Pancreas (tissue), 10 donors: ENCODE measurements at regions of chr3 and their contacts with region 1.

Region 1: DNA sequence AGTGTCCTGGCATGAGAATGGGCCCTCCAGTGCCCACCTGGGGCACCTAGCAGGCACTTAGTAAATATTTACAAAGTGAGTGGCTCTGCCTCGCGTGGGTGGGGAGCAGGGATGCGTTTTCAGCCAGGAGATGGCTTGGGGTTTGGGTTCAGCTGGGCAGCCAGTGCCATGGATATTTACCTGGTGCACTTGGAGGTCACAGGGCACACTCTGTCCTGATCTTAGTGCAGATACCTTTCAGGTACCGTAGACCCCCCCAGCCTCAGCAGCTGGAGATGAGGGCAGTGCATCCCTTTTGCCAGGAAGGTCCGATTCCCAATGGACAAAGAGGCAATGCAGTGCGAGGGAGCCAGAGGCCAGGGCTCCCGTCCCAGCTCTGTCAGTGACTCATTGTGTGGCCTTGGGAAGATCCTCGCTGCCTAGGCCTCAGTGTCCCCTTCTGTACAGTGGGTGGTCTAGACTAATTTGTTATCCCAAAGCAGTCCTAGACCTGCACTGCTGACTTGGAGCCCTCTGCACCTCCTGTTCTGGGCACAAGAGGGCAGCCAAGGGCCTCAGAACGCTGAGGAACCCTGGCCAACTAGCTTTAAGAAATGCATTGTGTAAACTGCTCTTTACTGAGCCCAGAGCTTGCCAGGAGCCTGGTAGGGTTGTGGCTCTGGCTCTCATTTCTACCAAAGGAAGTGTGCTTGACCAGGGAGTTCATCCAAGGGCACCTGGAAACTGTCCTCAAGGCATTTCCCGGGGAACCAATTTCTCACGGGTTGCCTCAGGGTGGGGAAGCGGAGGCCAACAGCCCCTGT is 16.0 kb downstream of the HDAC11 start:
- DNase-seq: peak; percentile 59 to 89 (median 81)
- ATAC-seq: peak; percentile 96 to 98 (median 97)
- H3K4me3 ChIP-seq: no peak overlapping the region
- H3K27ac ChIP-seq: no peak overlapping the region
- H3K4me1 ChIP-seq: no peaks in the 10 kb centered on the region
- H3K27me3 ChIP-seq: no peaks in the 10 kb centered on the region
- CTCF ChIP-seq: peak; percentile 79 to 91 (median 84)

Region 2: GRCh38 chr3:13217736-13218540 is 278.2 kb before region 1 on chr3:
- intact Hi-C with region 1: no loop called
- DNase-seq: no peak
- ATAC-seq: peak in 1 of 4 donors; percentile 9
- H3K4me3 ChIP-seq: no peak overlapping the region
- H3K27ac ChIP-seq: no peak overlapping the region
- H3K4me1 ChIP-seq: peaks cover 6 to 19% (median 9%) of the 10 kb centered on the region in 3 donors
- H3K27me3 ChIP-seq: no peaks in the 10 kb centered on the region
- CTCF ChIP-seq: no peak

Region 3: DNA sequence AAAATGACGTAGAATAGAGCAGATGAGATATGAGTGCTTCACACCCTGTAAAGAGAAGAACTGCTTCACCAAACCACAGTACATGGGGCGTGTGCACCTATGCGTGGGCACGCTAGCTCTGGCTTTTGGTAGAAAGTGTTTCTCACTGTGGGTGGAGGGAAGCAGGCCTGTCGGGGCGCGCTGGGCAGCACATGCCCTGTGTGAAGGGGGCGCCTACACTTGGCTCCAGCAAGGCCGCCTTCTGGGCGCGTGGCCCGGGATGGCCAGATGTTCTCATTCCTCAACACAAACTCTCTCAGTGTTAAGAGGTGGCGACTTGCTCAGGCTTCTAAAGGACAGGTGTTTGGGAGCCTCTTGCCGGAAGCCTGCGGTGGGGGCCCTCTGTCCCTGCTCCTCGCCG is 142.8 kb after region 1 on chr3:
- intact Hi-C with region 1: loop called in 1 of 3 experiments (anchors 5 kb)
- DNase-seq: no peak
- ATAC-seq: no peak
- H3K4me3 ChIP-seq: no peak overlapping the region
- H3K27ac ChIP-seq: no peak overlapping the region
- H3K4me1 ChIP-seq: no peaks in the 10 kb centered on the region
- H3K27me3 ChIP-seq: no peaks in the 10 kb centered on the region
- CTCF ChIP-seq: no peak

Region 4: GRCh38 chr3:13648060-13649001 is 152.2 kb after region 1 on chr3:
- intact Hi-C with region 1: loop called (anchors 2 to 5 kb)
- DNase-seq: peak; percentile 67 to 95 (median 86)
- ATAC-seq: peak; percentile 82 to 88 (median 86)
- H3K4me3 ChIP-seq: no peak overlapping the region
- H3K27ac ChIP-seq: no peak overlapping the region
- H3K4me1 ChIP-seq: no peaks in the 10 kb centered on the region
- H3K27me3 ChIP-seq: no peaks in the 10 kb centered on the region
- CTCF ChIP-seq: peak; percentile 95 to 99 (median 96)

Region 5: DNA sequence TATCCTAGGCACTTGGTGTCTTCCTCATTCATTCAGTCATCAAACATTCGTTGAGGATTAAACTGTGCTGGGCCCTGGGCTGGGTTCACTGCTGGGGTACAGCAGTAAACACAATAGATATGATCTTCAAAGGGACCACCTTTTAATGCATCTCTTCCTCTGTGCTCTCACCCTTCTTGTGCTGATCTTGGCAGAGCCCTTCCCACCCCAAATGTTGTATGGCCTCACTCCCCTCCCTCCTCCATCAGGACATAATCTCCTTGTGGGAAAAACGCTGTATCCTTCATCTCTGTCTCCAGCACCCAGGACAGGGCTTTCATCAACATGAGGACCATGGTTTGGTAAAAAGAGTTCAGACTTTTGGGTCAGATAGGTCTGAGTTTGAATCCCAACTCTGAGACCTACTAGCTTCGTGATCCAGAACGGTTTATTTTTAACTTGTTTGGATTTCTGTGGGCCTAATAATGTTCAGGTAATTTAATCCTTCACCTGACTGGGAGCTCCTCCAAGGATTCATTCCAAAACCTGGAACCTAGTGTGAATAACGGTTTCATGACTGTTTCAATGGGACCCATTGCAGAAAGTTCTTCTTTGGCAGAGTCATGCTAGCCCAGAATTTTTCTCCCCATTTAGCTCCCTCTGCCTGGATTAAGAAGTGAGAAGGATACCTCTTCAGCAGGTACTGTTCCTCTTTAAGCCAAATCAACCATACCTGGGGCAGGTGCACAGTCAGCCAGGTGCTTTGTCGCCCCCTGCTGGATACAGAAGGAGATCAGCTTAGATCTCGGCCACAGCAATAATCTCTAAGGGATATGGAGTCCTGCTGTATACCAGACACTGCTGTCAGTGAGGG is 389.0 kb after region 1 on chr3:
- intact Hi-C with region 1: loop called in 1 of 3 experiments (anchors 10 kb)
- DNase-seq: peak in 5 of 6 donors; percentile 52 to 75 (median 69)
- ATAC-seq: peak; percentile 86 to 95 (median 91)
- H3K4me3 ChIP-seq: no peak overlapping the region
- H3K27ac ChIP-seq: no peak overlapping the region
- H3K4me1 ChIP-seq: peaks cover 0 to 3% (median 0%) of the 10 kb centered on the region in 3 donors
- H3K27me3 ChIP-seq: peaks cover 0 to 5% (median 0%) of the 10 kb centered on the region in 4 donors
- CTCF ChIP-seq: peak; percentile 65 to 78 (median 71)